Activated CD8-positive, alpha-beta memory T cell treated with anti-CD3 and anti-CD28 coated beads, Interleukin-2, amount 10 ng/mL, durations not matched to agents 7 days and 5 days (primary cell): ENCODE measurements at regions of chr18 and their contacts with region 1.

Region 1: DNA sequence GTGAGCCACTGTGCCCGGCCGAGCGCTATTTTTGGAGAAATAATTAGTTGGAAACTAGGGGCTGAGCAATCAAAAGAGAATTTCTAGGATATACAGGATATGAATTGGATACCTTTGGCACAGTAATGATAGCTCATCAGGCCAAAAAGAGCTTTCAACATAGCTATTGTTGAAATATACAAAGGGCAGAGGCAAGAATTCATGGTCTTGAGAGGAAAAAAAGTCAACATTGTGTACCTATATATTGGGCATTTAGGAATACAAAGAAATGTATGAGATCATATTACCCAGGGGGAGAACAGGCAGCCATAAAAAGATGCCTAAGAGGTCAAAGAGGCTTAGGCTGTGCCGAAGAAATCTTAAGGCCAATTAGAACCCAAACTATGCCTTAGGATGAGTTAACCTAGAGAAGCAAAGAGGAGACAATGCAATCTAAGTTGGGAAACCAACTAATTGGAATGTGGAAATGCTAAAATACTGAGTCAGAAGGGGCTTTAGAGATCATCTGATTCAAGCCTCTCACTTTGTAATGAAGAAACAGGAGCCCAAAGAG is 99.0 kb downstream of the RBBP8 start:
- DNase-seq: no peak
- ATAC-seq: no peak
- H3K4me3 Mint-ChIP-seq: no peak overlapping the region
- H3K27ac Mint-ChIP-seq: no peak overlapping the region
- H3K4me1 Mint-ChIP-seq: peaks cover 5% of the 10 kb centered on the region
- H3K27me3 Mint-ChIP-seq: no peaks in the 10 kb centered on the region

Region 2: GRCh38 chr18:23020555-23021294 is 11.4 kb before region 1 on chr18:
- CTCF ChIA-PET with region 1: interaction called, 13 read pairs
- DNase-seq: no peak
- ATAC-seq: peak; percentile 71
- H3K4me3 Mint-ChIP-seq: peak overlapping the region; percentile 71
- H3K27ac Mint-ChIP-seq: peak overlapping the region; percentile 70
- H3K4me1 Mint-ChIP-seq: peaks cover 11% of the 10 kb centered on the region
- H3K27me3 Mint-ChIP-seq: no peaks in the 10 kb centered on the region

Region 3: DNA sequence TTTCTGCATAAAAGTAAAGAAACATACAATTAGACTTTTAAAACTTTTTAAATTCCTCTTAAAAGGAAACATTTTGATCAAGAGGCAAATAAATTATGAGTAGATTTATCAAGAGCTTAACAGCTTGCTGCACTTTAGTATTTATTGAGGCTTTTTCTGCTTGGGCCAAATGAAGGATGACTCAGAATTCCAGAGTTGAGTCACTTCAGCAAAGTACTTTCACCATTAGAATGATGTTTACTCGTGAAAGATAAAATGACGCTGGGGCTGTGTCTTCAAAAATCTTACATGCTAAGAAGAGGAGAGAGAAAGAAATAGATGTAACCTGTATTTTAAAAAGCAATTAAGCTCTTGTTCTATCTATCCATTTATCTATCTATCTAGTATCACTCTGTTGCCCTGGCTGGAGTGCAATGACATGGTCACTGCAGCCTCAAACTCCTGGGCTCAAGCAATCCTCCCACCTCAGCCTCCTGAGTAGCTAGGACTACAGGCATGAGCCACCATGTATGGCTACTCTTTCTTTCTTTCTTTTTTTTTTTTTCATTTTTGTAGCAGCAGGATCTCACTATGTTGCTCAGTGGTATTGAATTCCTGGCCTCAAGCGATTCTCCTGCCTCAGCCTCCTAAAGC is 345.7 kb after region 1 on chr18:
- CTCF ChIA-PET with region 1: interaction called, 11 read pairs
- DNase-seq: no peak
- ATAC-seq: peak; percentile 85
- H3K4me3 Mint-ChIP-seq: no peak overlapping the region
- H3K27ac Mint-ChIP-seq: peak overlapping the region; percentile 13
- H3K4me1 Mint-ChIP-seq: peaks cover 18% of the 10 kb centered on the region
- H3K27me3 Mint-ChIP-seq: no peaks in the 10 kb centered on the region